BJ (cell line): ENCODE measurements at regions of chr17 and their contacts with region 1.

Region 1: GRCh38 chr17:58337600-58338453 is 9.2 kb upstream of the TSPOAP1 start:
- DNase-seq: peak; percentile 70
- H3K4me3 ChIP-seq: no peak overlapping the region
- H3K27me3 ChIP-seq: no peaks in the 10 kb centered on the region
- CTCF ChIP-seq: no peak; the same call in 1 of the 2 replicates

Region 2: GRCh38 chr17:58270476-58271215 is 67.2 kb before region 1 on chr17:
- CTCF ChIA-PET with region 1: no interaction called
- POLR2A ChIA-PET with region 1: no interaction called
- DNase-seq: no peak
- H3K4me3 ChIP-seq: no peak overlapping the region
- H3K27me3 ChIP-seq: no peaks in the 10 kb centered on the region
- CTCF ChIP-seq: no peak

Region 3: DNA sequence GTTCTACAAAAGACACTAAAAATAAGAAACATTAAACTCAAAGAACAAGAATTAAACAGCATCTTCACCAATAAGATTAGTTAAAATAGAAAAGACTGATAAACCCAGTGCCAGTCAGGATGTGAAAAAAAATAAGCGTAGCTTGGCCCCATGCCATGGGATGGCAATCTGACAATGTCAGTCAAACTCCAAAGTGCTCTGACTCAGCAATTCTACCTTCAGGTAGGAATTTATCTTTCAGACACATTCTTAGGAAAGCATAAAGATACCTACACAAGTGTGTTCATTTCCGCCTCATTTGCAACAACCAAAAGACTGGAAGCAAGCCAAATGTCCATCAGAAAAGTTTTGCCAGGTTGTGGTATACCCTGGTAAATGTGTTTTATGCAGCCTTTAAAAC is 48.0 kb before region 1 on chr17:
- CTCF ChIA-PET with region 1: no interaction called
- POLR2A ChIA-PET with region 1: no interaction called
- DNase-seq: no peak
- H3K4me3 ChIP-seq: no peak overlapping the region
- H3K27me3 ChIP-seq: no peaks in the 10 kb centered on the region; the same call in 1 of the 2 replicates
- CTCF ChIP-seq: no peak

Region 4: DNA sequence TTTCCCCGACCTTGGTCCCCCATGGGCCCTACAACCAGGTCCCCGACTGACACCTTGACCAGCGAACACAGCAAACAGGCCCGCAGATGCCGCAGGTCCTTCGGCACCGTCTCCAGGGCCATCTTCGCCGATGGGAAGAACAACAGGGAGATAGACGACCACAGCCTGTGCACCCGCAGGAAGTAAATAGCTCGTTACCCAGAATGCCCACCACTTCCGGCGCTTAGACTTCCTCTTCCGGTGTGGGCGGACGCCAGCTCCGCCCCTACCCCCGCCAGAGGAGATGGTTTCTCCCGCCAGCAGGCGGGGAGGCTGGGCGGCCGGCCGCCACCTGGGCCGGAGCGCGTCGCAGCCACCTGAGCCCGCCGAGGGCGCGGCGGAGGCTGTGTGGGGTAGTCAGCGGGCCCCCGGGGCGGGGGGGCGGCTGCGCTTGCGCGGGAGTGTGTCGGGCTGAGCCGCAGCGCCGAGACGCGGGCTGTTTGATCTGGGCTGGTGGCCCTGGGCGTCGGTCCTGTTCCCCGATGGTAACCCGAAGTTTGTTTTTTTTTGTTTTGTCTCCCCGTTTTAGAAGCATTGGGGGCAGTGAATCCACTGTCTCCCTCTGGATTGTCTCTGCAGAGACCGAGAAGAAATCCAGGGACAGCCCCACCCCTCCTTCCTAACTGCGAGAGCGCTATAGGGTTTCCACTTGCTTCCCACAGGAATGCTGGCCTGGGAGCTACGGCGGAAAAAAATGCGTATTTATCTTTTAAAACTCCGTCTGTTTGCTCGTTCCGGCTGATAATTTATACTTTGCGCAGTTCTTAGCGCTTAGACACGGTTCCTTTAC is 14.4 kb after region 1 on chr17 and contains the start of gene SUPT4H1:
- CTCF ChIA-PET with region 1: interaction called, 11 read pairs
- POLR2A ChIA-PET with region 1: interaction called, 26 read pairs
- DNase-seq: peak; percentile 39
- H3K4me3 ChIP-seq: peak within 1 kb of the TSS; percentile 74
- H3K27me3 ChIP-seq: 0 out of 2 replicates have a peak, but pooled peaks cover 1% of the 10 kb centered on the region
- CTCF ChIP-seq: no peak
- polyA plus RNA-seq, gene SUPT4H1: 145 and 215 TPM in 2 replicates

Region 5: DNA sequence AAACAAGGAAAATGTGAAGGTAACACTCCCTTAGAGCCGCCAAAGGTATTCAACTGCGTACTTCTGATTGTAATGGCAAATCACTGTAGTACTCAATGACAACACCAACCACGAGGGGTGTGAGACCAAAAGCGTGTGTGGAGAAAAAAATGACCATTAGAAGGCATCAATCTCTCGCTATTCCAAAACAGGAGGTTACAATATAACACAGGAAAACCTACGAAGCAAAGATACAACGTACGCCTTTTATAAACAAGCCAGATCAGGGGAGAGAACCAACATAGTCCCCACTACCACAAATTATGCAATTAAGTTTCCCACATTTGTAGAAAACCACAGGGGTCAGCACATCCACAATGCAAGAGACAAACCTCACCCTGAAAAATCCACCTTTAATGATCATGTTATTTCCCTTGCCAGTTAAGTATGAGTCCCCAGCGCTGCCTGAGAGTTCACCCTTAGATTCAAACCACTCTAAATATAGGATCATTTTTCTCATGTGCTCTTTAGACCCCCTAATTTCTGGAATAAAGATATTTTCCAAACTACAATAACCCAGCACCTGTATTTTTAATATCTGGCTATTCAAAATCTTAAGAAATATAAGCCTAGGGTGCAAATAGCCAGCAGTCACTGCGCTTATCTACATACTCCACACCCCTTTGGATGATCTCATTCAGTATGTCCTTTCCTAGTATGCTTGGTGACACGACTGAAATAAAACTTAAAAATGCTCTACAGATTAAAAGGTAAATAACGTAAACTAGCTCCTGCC is 341.6 kb after region 1 on chr17:
- CTCF ChIA-PET with region 1: no interaction called
- POLR2A ChIA-PET with region 1: no interaction called
- DNase-seq: no peak
- H3K4me3 ChIP-seq: no peak overlapping the region
- H3K27me3 ChIP-seq: no peaks in the 10 kb centered on the region
- CTCF ChIP-seq: no peak